Activated CD4-positive, alpha-beta T cell treated with anti-CD3 and anti-CD28 coated beads for 36 hours (primary cell): ENCODE measurements at regions of chr1 and their contacts with region 1.

Region 1: GRCh38 chr1:166089804-166090203 is 77.0 kb downstream of the FAM78B start:
- DNase-seq: peak; percentile 15
- ATAC-seq: peak; percentile 55
- H3K4me3 Mint-ChIP-seq: no peak overlapping the region
- H3K27ac Mint-ChIP-seq: no peak overlapping the region
- H3K4me1 Mint-ChIP-seq: peaks cover 5% of the 10 kb centered on the region
- H3K27me3 Mint-ChIP-seq: no peaks in the 10 kb centered on the region

Region 2: GRCh38 chr1:165726169-165726568 is 363.6 kb before region 1 on chr1:
- CTCF ChIA-PET with region 1: no interaction called
- POLR2A ChIA-PET with region 1: no interaction called
- intact Hi-C with region 1: loop called in 1 of 2 experiments (anchors 10 kb)
- DNase-seq: no peak
- ATAC-seq: no peak
- H3K4me3 Mint-ChIP-seq: no peak overlapping the region
- H3K27ac Mint-ChIP-seq: no peak overlapping the region
- H3K4me1 Mint-ChIP-seq: no peaks in the 10 kb centered on the region
- H3K27me3 Mint-ChIP-seq: no peaks in the 10 kb centered on the region

Region 3: DNA sequence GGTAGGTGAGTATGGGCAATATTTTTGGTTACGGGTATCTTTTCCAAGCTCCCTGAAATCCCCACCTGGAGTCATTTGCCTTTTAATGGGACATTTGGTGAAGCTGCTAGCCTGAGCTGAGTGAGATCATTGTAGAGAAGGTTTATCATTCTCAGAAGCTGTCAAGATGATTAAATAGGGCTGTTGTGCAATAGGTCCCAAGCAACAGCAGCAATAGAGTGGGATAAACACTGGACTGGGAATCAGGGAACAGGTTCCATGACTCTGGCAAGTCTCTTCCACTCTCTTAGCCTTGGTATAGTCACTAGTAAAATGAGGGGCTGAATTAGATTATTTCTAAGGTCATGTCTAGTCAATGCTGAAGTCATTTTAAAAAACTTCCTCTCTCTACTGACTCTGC is 107.3 kb after region 1 on chr1:
- CTCF ChIA-PET with region 1: no interaction called
- POLR2A ChIA-PET with region 1: no interaction called
- intact Hi-C with region 1: no loop called
- DNase-seq: no peak
- ATAC-seq: no peak
- H3K4me3 Mint-ChIP-seq: no peak overlapping the region
- H3K27ac Mint-ChIP-seq: no peak overlapping the region
- H3K4me1 Mint-ChIP-seq: no peaks in the 10 kb centered on the region
- H3K27me3 Mint-ChIP-seq: peaks cover 7% of the 10 kb centered on the region